ENCODE measurements at regions of chr5 and their contacts with region 1.

Region 1: GRCh38 chr5:151523335-151523734 is 67.8 kb downstream of the FAT2 start:
- DNase-seq: no peak
- ATAC-seq: peak; percentile 40

Region 2: DNA sequence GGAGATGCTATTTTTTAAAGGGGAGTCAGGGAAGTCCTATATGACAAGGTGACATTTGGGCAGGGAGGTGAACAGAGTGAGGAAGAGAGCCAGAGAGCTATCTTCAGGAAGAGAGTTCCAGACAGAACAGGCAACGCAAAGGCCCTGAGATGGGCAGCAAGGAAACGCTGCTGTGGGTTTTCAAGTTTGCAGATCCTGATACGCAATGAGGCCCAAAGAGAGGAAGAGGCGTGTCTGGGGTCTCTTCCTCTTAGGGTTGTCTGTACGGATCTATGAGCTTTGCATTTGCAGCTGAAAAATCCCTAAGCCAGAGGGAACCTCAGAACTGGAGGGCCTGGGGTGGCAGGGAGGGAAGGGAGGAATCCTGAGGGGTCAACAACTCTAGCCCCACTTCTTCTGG is 54.2 kb after region 1 on chr5:
- intact Hi-C with region 1: no loop called
- DNase-seq: no peak
- ATAC-seq: peak; percentile 49

Region 3: GRCh38 chr5:151651997-151652645 is 128.8 kb after region 1 on chr5:
- intact Hi-C with region 1: loop called (anchors 5 kb)
- DNase-seq: peak; percentile 84
- ATAC-seq: peak; percentile 96